Activated CD4-positive, alpha-beta T cell treated with anti-CD3 and anti-CD28 coated beads, Interleukin-2, amount 10 ng/mL, durations not matched to agents 24 days and 14 days (primary cell): ENCODE measurements at regions of chrX and their contacts with region 1.

Region 1: GRCh38 chrX:106168107-106168506 is at the start of gene PWWP3B:
- DNase-seq: no peak
- H3K4me3 Mint-ChIP-seq: no peak within 1 kb of the TSS
- H3K27ac Mint-ChIP-seq: no peak within 1 kb of the TSS
- H3K4me1 Mint-ChIP-seq: no peaks in the 10 kb centered on the region
- H3K27me3 Mint-ChIP-seq: no peaks in the 10 kb centered on the region
- total RNA-seq, gene PWWP3B: not detected in 2 replicates

Region 2: GRCh38 chrX:106208154-106208553 is 40.0 kb after region 1 on chrX:
- intact Hi-C with region 1: no loop called
- DNase-seq: no peak
- H3K4me3 Mint-ChIP-seq: no peak overlapping the region
- H3K27ac Mint-ChIP-seq: no peak overlapping the region
- H3K4me1 Mint-ChIP-seq: no peaks in the 10 kb centered on the region
- H3K27me3 Mint-ChIP-seq: no peaks in the 10 kb centered on the region

Region 3: DNA sequence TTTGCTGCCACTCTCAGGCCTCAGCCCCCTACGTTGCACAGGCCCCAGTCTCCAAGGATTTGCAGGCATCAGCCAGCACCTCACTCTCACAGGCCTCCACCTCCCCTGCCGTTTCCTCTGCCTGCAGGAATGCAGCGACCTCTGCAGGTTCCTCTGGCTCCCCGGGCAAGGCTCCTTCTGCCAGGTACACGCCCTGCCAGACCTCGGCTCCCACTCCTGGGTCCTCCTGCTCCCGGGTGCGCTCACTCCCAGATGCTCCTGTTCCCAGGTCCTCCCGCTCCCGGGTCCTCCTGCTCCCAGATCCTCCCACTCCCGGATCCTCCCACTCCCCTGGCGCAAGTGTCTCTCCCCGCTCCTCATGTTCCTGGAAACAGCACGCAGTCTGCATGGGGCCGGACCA is 299.3 kb after region 1 on chrX:
- intact Hi-C with region 1: loop called (anchors 10 kb)
- DNase-seq: no peak
- H3K4me3 Mint-ChIP-seq: no peak overlapping the region
- H3K27ac Mint-ChIP-seq: no peak overlapping the region
- H3K4me1 Mint-ChIP-seq: no peaks in the 10 kb centered on the region
- H3K27me3 Mint-ChIP-seq: peaks cover 1% of the 10 kb centered on the region